Gastrocnemius medialis (tissue), 4 donors: ENCODE measurements at regions of chrX and their contacts with region 1.

Region 1: GRCh38 chrX:23919706-23920320 is 12.0 kb downstream of the CXorf58 start:
- DNase-seq: no peak
- ATAC-seq: no peak
- H3K4me3 ChIP-seq: no peak overlapping the region
- H3K27ac ChIP-seq: no peak overlapping the region
- H3K4me1 ChIP-seq: no peaks in the 10 kb centered on the region
- H3K27me3 ChIP-seq: no peaks in the 10 kb centered on the region
- CTCF ChIP-seq: no peak
- POLR2A ChIP-seq: no peak

Region 2: GRCh38 chrX:23705235-23705634 is 214.6 kb before region 1 on chrX:
- in situ Hi-C with region 1: no loop called
- intact Hi-C with region 1: no loop called
- DNase-seq: no peak
- ATAC-seq: no peak
- H3K4me3 ChIP-seq: no peak overlapping the region
- H3K27ac ChIP-seq: no peak overlapping the region
- H3K4me1 ChIP-seq: no peaks in the 10 kb centered on the region
- H3K27me3 ChIP-seq: no peaks in the 10 kb centered on the region
- CTCF ChIP-seq: no peak
- POLR2A ChIP-seq: no peak

Region 3: DNA sequence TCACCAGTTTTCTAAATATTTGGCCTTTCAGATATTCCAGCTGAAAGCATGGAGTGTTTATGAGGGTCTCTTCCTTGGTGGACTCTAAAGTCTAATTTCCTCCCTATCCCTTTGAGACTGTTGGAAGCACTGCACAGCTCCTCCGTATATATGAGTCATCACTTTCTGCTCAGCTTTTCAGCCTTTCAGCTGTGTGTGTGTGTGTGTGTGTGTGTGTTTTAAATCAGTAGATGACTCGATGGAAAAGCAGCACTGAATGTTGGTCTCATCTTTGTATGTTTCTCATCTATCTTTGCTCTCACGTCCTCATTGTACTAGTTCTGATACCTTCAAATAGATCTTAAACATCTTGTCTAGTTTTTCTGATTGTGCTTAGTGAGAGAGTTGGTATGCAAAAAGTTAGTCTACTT is 311.3 kb after region 1 on chrX:
- in situ Hi-C with region 1: loop called in 1 of 4 experiments (anchors 10 kb)
- intact Hi-C with region 1: no loop called
- DNase-seq: no peak
- ATAC-seq: no peak
- H3K4me3 ChIP-seq: no peak overlapping the region
- H3K27ac ChIP-seq: no peak overlapping the region
- H3K4me1 ChIP-seq: no peaks in the 10 kb centered on the region
- H3K27me3 ChIP-seq: no peaks in the 10 kb centered on the region
- CTCF ChIP-seq: no peak
- POLR2A ChIP-seq: no peak